Activated CD4-positive, alpha-beta T cell treated with anti-CD3 and anti-CD28 coated beads, Interleukin-2, amount 10 ng/mL, durations not matched to agents 7 days and 5 days (primary cell): ENCODE measurements at regions of chr17 and their contacts with region 1.

Region 1: DNA sequence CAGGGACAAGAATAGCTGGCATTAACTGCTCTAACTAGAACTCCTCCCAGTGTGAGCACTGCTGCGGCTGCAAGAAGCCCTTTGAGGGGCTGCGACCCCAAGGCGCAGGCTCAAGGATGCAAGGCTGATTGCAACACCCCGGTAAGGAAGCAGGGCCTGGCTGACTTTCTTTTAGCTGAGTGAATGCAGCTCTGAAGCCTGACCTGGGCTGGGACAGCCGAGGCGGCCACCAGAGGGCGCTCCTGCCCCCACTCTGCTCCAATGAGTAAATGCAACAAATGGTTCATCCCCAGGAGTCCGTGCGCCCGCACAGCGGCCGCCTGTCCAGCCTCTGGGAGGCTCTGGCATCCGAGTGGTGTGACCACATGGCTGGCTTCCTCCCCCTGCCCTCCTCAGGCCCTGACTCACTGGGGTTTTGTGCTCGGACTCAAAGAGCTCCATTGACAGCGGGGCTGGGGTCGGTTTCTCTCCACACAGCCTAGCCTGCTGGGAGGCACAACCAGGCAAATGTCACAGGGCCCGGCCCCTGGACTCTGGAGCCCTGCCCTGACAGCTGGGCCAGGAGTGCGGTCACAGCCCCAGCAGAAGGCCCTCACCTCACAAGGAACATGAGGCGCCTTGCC is at the start of gene SMIM5:
- DNase-seq: peak; percentile 88
- H3K4me3 Mint-ChIP-seq: no peak within 1 kb of the TSS
- H3K27ac Mint-ChIP-seq: no peak within 1 kb of the TSS
- H3K4me1 Mint-ChIP-seq: peaks cover 3% of the 10 kb centered on the region
- H3K27me3 Mint-ChIP-seq: no peaks in the 10 kb centered on the region
- total RNA-seq, gene SMIM5: 0.10 to 0.12 TPM

Region 2: GRCh38 chr17:75601057-75602051 is 31.6 kb before region 1 on chr17:
- CTCF ChIA-PET with region 1: interaction called, 20 read pairs
- POLR2A ChIA-PET with region 1: interaction called, 3 read pairs
- DNase-seq: peak; percentile 68
- H3K4me3 Mint-ChIP-seq: no peak overlapping the region
- H3K27ac Mint-ChIP-seq: no peak overlapping the region
- H3K4me1 Mint-ChIP-seq: no peaks in the 10 kb centered on the region
- H3K27me3 Mint-ChIP-seq: no peaks in the 10 kb centered on the region

Region 3: DNA sequence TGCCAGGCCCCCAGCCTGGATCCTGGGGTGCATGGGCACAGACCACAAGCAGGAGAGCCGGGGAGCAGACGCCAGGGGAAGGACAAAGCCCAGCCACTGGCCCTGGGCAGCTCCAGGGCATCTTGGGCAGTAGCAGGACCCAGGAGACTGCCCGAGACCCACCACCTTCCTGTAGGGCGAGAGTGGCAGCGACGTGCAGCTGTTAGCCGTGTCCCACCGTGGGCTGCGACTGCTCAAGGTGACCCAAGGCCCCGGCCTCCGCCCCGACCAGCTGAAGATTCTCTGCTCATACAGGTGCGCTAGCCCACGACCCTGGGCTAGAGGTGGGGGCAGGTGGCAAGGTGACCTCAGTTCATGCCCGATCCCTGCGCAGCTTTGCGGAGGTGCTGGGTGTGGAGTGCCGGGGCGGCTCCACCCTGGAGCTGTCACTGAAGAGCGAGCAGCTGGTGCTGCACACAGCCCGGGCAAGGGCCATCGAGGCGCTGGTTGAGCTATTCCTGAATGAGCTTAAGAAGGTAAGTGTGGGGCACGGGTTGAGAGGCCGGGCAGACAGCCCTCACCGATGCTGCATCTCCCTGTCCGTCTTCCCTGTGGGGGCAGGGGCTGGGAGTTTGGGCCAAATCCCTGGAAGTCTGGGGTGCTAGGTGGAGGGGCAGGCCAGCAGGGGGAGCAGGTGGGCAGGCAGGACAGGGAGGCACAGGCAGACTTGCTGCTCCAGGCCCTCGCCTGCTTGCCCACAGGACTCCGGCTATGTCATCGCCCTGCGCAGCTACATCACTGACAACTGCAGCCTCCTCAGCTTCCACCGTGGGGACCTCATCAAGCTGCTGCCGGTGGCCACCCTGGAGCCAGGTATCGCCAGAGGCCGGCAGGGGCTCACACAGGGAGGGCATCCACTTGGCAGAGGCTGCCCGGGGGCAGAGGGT is 13.2 kb before region 1 on chr17:
- CTCF ChIA-PET with region 1: interaction called, 18 read pairs
- POLR2A ChIA-PET with region 1: no interaction called
- DNase-seq: peak; percentile 35
- H3K4me3 Mint-ChIP-seq: no peak overlapping the region
- H3K27ac Mint-ChIP-seq: peak overlapping the region; percentile 71
- H3K4me1 Mint-ChIP-seq: no peaks in the 10 kb centered on the region
- H3K27me3 Mint-ChIP-seq: no peaks in the 10 kb centered on the region

Region 4: GRCh38 chr17:75645889-75646637 is 13.1 kb after region 1 on chr17:
- CTCF ChIA-PET with region 1: interaction called, 48 read pairs
- POLR2A ChIA-PET with region 1: no interaction called
- DNase-seq: no peak
- H3K4me3 Mint-ChIP-seq: no peak overlapping the region
- H3K27ac Mint-ChIP-seq: peak overlapping the region; percentile 80
- H3K4me1 Mint-ChIP-seq: peaks cover 15% of the 10 kb centered on the region
- H3K27me3 Mint-ChIP-seq: no peaks in the 10 kb centered on the region

Region 5: DNA sequence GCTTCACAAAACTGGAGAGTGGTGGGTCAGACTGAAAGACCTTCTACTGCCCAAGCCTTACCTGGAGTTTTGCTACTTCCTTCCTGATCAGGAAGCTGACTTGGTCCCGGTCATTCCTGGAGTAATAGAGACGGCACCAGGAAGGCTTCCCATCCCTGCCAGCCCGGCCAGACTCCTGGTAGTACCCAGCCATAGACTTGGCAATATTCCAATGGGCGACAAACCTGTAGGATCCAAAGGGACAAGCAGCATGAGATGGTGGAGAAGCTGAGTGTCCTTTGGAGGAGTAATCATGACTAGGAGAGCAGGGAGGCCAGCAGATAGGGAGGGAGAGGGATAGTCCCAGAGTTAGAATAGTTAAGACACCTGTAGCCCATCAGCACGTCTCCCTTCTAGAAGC is 25.3 kb after region 1 on chr17:
- CTCF ChIA-PET with region 1: interaction called, 17 read pairs
- POLR2A ChIA-PET with region 1: no interaction called
- DNase-seq: no peak
- H3K4me3 Mint-ChIP-seq: no peak overlapping the region
- H3K27ac Mint-ChIP-seq: no peak overlapping the region
- H3K4me1 Mint-ChIP-seq: peaks cover 6% of the 10 kb centered on the region
- H3K27me3 Mint-ChIP-seq: no peaks in the 10 kb centered on the region